ENCODE measurements at regions of chr1 and their contacts with region 1.

Region 1: GRCh38 chr1:175353066-175353465 is 160.5 kb upstream of the KIAA0040 start:
- DNase-seq: no peak
- H3K4me3 ChIP-seq: no peak overlapping the region
- H3K27ac ChIP-seq: no peak overlapping the region
- H3K4me1 ChIP-seq: no peaks in the 10 kb centered on the region
- H3K27me3 ChIP-seq: peaks cover 7% of the 10 kb centered on the region
- CTCF ChIP-seq: no peak

Region 2: DNA sequence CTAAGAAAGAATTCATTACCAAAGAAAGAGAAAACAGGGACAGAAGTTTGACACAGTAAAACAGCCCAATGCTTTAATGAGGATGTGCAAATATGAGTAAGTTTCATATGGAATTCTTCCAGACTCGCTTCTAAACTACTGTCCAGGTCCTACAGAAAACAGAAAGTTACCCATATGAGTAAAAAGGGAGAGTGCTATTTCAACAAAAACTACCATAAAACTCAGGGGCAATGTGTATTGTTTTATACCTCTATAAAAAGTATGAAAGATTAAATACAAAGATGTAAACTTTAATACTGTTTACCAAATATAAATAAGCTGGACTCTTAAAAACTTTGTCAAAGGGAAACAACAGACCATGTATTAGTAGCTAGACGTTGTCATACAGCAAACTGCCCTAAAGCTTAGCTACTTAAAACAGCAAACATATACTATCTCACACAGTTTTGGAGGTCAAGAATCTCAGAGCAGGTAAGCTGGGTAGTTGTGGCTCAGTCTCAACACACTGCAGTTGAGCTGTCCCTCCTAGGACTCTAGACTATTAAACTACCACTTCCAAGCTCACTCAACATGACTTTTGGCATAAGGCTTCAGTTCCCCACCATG is 679.1 kb after region 1 on chr1:
- CTCF ChIA-PET with region 1: no interaction called
- POLR2A ChIA-PET with region 1: interaction called, 14 read pairs
- intact Hi-C with region 1: no loop called
- DNase-seq: no peak
- H3K4me3 ChIP-seq: no peak overlapping the region
- H3K27ac ChIP-seq: no peak overlapping the region
- H3K4me1 ChIP-seq: no peaks in the 10 kb centered on the region
- H3K27me3 ChIP-seq: no peaks in the 10 kb centered on the region
- CTCF ChIP-seq: no peak

Measured in A673 (cell line).